ENCODE measurements at regions of chr11 and their contacts with region 1.

Region 1: DNA sequence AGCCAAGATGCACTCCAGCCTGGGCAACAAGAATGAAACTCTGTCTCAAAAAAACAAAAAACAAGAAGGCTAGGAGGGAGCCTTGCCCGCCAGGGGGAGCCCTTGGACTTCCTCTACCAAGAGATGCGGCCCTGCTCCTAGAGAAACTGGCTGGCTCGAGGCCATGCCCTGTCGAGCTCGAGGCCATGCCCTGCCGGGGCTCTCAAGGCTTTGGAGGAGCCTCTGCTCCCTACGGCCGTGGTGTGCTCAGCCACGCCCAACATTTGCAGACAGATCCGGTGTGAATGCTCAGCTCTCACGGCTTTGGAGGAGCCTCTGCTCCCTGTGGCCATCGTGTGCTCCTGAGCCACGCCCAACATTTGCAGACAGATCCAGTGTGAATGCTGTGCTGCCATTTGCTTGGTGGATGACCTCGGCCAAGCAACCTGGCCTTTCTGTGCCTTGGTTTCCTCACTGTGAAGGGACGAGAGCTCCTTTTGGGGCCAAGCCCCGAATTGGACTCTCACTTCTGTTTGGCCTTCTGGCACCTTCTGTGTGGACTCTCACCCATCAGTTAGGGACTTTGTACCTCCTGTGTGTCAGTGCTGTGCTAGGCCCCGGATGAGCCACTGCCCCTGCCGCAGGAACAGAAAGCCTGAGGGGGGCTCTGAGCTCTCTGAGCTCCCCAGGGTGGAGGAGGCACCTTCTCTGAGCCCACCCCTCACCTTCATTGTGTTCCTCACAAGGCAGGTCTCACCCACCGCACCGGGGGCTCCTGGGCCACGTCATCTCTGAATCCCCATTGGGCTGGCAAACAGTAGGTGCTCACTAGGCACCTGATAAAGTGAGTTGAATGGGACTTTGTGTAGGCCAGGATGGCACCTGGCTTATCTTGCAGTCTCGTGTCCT is 14.1 kb downstream of the C11orf24 start:
- DNase-seq: peak; percentile 88
- H3K4me3 ChIP-seq: peak overlapping the region in 1 of 2 experiments; percentile 13; a peak in 1 of 4 replicates
- H3K27ac ChIP-seq: no peak overlapping the region
- H3K4me1 ChIP-seq: peaks cover 0 to 4% of the 10 kb centered on the region in 2 experiments; a peak in 2 of 4 replicates
- H3K27me3 ChIP-seq: no peaks in the 10 kb centered on the region
- CTCF ChIP-seq: peak; percentile 87
- EP300 ChIP-seq: no peak
- RAD21 ChIP-seq: peak; percentile 86

Region 2: DNA sequence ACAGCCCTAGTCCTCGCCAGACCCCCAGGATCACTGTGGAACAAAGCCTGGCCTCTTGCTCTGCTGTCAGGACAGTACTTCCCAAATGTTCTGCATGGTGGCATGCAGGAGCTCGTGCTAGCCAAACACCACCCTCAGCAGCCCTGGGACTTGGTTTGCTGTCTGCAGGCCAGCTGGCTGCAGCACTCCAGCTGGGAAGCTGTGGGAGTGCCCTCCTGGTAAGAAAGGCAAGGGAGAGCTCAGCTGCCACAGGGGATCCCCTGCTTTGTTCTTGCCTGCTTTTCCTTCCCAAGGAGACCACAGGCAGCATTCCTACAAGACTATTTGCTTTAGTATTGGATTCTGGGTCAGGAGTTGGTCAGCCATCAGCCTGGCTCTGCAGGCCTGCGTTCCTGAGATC is 191.0 kb before region 1 on chr11:
- CTCF ChIA-PET with region 1: no interaction called
- POLR2A ChIA-PET with region 1: no interaction called
- DNase-seq: no peak
- H3K4me3 ChIP-seq: no peak overlapping the region
- H3K27ac ChIP-seq: no peak overlapping the region
- H3K4me1 ChIP-seq: no peaks in the 10 kb centered on the region
- H3K27me3 ChIP-seq: no peaks in the 10 kb centered on the region
- CTCF ChIP-seq: no peak
- EP300 ChIP-seq: no peak
- RAD21 ChIP-seq: no peak

Region 3: GRCh38 chr11:68271781-68272608 is 14.3 kb after region 1 on chr11 and contains the start of gene C11orf24:
- CTCF ChIA-PET with region 1: interaction called, 50 read pairs
- POLR2A ChIA-PET with region 1: interaction called, 13 read pairs
- DNase-seq: peak; percentile 100
- H3K4me3 ChIP-seq: peak within 1 kb of the TSS; percentile 67 to 75
- H3K27ac ChIP-seq: peak within 1 kb of the TSS; percentile 87 to 94
- H3K4me1 ChIP-seq: peaks cover 14 to 17% of the 10 kb centered on the region in 2 experiments; a peak in 3 of 4 replicates
- H3K27me3 ChIP-seq: no peaks in the 10 kb centered on the region
- CTCF ChIP-seq: no peak
- EP300 ChIP-seq: peak in 1 of 2 experiments; percentile 34; a peak in 2 of 4 replicates
- RAD21 ChIP-seq: no peak
- polyA plus RNA-seq, gene C11orf24: 50.9 and 52.1 TPM in 2 replicates

Region 4: DNA sequence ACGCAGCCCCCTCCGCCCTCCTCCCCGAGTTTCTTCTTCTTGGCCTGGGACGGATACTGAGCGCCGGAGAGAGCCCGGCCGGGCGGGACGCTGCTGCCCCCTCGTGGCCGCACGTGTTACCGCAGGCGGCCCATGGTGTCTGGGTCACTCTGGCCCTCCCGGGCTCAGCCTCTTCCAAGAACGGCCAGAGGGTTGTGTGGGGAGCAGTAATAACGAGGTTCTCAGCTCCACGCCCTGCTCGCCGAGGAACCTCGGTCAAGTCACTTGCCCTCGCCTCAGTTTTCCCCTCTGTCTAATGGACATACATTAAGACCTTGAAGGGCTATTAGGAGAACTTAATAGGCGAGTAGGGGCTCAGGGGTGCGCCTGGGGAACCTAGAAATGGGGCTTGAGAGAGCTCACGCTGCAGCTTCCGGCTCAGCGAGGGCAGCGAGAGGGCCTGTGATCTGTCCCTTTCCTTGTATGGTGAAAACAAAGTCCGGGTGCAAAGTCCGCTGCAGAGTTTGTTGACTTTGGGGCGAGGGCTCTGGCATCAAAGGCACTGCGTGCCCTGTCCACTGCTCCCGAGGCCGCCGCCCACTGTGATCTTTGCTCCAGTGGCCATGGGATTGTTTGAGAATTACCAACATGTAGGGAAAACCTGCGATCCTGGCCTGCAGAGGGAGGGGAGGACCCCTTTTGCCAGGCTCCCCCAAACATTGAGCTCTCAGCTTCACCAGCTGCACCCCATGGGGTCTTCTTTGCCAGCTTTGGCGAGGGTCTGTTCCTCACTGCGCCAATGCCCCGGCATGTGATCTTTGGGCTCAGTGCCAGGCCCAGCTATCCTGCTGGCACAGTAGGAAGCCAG is 40.3 kb after region 1 on chr11:
- CTCF ChIA-PET with region 1: interaction called, 170 read pairs
- POLR2A ChIA-PET with region 1: interaction called, 3 read pairs
- DNase-seq: peak; percentile 92
- H3K4me3 ChIP-seq: peak overlapping the region in 1 of 2 experiments; percentile 34; a peak in 1 of 4 replicates
- H3K27ac ChIP-seq: no peak overlapping the region
- H3K4me1 ChIP-seq: peaks cover 0 to 7% of the 10 kb centered on the region in 2 experiments; a peak in 2 of 4 replicates
- H3K27me3 ChIP-seq: no peaks in the 10 kb centered on the region
- CTCF ChIP-seq: peak; percentile 92
- EP300 ChIP-seq: no peak
- RAD21 ChIP-seq: peak; percentile 89

Region 5: GRCh38 chr11:68383976-68384501 is 126.3 kb after region 1 on chr11:
- CTCF ChIA-PET with region 1: interaction called, 23 read pairs
- POLR2A ChIA-PET with region 1: no interaction called
- DNase-seq: peak; percentile 87
- H3K4me3 ChIP-seq: peak overlapping the region in 1 of 2 experiments; percentile 33; a peak in 1 of 4 replicates
- H3K27ac ChIP-seq: no peak overlapping the region; a peak in 1 of 4 replicates
- H3K4me1 ChIP-seq: peaks cover 0 to 16% of the 10 kb centered on the region in 2 experiments; a peak in 1 of 4 replicates
- H3K27me3 ChIP-seq: no peaks in the 10 kb centered on the region
- CTCF ChIP-seq: peak; percentile 98
- EP300 ChIP-seq: no peak
- RAD21 ChIP-seq: peak; percentile 89

Region 6: DNA sequence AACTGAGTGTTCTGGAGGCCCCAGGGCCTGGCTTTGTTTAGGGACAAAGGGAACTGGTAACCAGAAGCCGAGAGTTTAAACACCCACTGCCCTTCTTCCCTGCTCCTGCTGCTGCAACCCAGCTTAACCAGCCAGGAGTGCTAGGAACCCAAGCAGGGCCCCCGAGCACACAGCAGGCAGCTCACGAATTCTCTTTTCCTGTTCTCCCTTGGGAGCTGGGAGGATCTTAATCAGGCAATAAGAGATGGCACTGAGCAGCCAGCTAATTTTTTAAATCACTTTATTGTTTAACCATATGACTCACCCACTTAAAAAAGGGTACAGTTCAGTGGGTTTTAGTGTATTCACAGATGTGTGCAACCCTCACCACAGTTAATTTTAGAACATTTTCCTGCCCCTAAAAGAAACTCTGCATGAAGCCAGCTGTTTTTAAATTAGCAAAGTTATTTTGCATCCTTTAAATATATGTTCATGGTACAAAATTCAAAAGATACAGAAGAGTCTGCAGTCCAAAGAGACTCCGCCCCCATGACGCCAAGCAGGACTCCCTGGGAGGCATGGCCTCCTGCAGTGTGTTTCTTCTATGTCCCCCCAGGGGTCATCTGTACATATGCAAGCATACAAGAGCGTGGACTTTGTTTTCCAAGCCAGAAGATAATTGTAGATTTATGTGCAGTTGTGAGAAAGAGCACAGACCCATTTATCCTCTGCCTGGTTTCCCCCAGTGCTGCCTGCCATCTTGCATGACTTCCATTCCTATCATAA is 183.9 kb after region 1 on chr11:
- CTCF ChIA-PET with region 1: interaction called, 34 read pairs
- POLR2A ChIA-PET with region 1: no interaction called
- DNase-seq: peak; percentile 87
- H3K4me3 ChIP-seq: no peak overlapping the region
- H3K27ac ChIP-seq: peak overlapping the region; percentile 52 to 72; a peak in 3 of 4 replicates
- H3K4me1 ChIP-seq: peaks cover 24 to 33% of the 10 kb centered on the region in 2 experiments; a peak in 3 of 4 replicates
- H3K27me3 ChIP-seq: no peaks in the 10 kb centered on the region
- CTCF ChIP-seq: no peak
- EP300 ChIP-seq: peak in 1 of 2 experiments; percentile 61; a peak in 2 of 4 replicates
- RAD21 ChIP-seq: peak; percentile 9; the same call in 1 of the 2 replicates

Measured in SK-N-SH (cell line).